IMR-90 (cell line): ENCODE measurements at regions of chr12 and their contacts with region 1.

Region 1: DNA sequence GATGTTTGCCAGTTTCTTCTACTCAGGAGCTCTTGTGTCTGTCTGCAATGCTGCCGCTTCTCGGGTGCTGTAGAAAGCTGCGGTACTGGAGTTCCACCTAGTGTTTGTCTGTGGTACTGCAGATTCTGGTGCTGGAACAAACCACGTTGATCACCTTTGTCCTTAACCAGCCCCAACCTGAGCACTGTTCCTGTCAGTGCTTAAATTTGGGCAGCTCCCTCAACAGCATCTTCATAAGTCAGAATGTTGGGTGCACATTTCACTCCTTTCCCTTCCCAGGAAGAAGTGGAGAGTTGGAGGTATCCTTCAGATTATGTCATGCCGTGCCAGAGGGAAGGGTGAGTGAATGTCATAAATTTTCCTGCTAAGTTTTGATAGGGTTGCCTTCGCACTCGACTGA is 48.7 kb upstream of the LALBA start:
- DNase-seq: peak; percentile 72
- ATAC-seq: peak; percentile 99
- H3K4me3 ChIP-seq: no peak overlapping the region
- H3K27ac ChIP-seq: no peak overlapping the region
- H3K4me1 ChIP-seq: no peaks in the 10 kb centered on the region
- H3K27me3 ChIP-seq: peaks cover 2% of the 10 kb centered on the region
- CTCF ChIP-seq: peak; percentile 90
- POLR2A ChIP-seq: no peak
- RAD21 ChIP-seq: peak; percentile 91

Region 2: GRCh38 chr12:47963340-47964040 is 655.1 kb before region 1 on chr12 and contains the start of gene TMEM106C:
- CTCF ChIA-PET with region 1: no interaction called
- POLR2A ChIA-PET with region 1: no interaction called
- dilution Hi-C with region 1: no loop called
- in situ Hi-C with region 1: no loop called
- intact Hi-C with region 1: loop called (anchors 10 kb)
- DNase-seq: peak; percentile 85
- ATAC-seq: peak; percentile 99
- H3K4me3 ChIP-seq: peak within 1 kb of the TSS; percentile 63
- H3K27ac ChIP-seq: peak within 1 kb of the TSS; percentile 35; the same call in 1 of the 2 replicates
- H3K4me1 ChIP-seq: peaks cover 3% of the 10 kb centered on the region
- H3K27me3 ChIP-seq: peaks cover 8% of the 10 kb centered on the region
- CTCF ChIP-seq: peak; percentile 99
- POLR2A ChIP-seq: no peak
- RAD21 ChIP-seq: peak; percentile 67
- total RNA-seq, gene TMEM106C: 63.9 and 72.1 TPM in 2 replicates

Region 3: GRCh38 chr12:48084066-48084465 is 534.5 kb before region 1 on chr12:
- CTCF ChIA-PET with region 1: no interaction called
- POLR2A ChIA-PET with region 1: no interaction called
- dilution Hi-C with region 1: no loop called
- in situ Hi-C with region 1: no loop called
- intact Hi-C with region 1: loop called (anchors 10 kb)
- DNase-seq: peak; percentile 13
- ATAC-seq: no peak; the same call in 1 of the 2 replicates
- H3K4me3 ChIP-seq: no peak overlapping the region
- H3K27ac ChIP-seq: no peak overlapping the region
- H3K4me1 ChIP-seq: no peaks in the 10 kb centered on the region
- H3K27me3 ChIP-seq: no peaks in the 10 kb centered on the region
- CTCF ChIP-seq: 0 out of 2 replicates have a peak, but pooled peaks have one; percentile 20
- POLR2A ChIP-seq: no peak
- RAD21 ChIP-seq: no peak; the same call in 1 of the 2 replicates

Region 4: DNA sequence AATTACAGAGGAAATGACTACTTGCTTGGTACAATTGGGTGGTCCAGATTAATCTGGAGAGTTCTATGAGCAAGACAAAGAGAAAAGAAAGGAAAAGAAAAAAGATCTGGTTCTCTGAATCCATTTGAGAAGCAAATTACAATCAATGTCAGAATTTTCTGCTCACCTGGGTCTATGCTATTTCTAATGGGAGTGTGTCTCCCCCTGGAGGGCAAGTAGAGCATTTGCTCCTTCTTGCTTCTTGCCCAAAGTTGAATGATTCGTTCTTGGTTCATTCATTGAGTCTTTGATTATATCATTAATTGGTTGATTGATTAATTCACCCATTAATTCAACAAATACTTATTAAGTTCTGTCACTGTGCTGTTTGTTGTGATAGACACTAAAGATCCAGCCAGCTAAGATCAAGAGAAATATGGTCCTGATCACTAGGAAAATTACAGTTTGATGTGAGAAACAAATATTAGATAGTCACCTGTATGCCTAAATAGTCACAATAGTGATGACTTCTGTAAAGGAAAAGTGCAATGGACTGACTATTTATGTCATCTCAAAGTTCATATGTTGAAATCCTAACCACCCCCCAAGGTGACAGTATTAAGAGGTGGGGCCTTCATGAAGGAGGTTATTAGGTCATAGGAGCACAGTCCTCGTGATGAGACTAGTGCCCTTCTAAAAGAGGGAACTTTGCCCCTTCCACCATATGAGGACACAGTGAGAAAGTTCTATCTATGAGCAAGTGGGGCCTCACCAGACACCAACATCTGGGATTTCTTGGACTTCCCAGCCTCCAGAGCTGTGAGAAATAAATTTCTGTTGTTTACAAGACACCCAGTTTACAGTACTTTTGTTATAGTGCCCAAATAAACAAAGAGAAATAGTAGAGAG is 453.2 kb before region 1 on chr12:
- CTCF ChIA-PET with region 1: no interaction called
- POLR2A ChIA-PET with region 1: no interaction called
- dilution Hi-C with region 1: no loop called
- in situ Hi-C with region 1: no loop called
- intact Hi-C with region 1: loop called (anchors 5 kb)
- DNase-seq: peak; percentile 68
- ATAC-seq: peak; percentile 57; the same call in 1 of the 2 replicates
- H3K4me3 ChIP-seq: no peak overlapping the region
- H3K27ac ChIP-seq: no peak overlapping the region
- H3K4me1 ChIP-seq: no peaks in the 10 kb centered on the region
- H3K27me3 ChIP-seq: peaks cover 7% of the 10 kb centered on the region
- CTCF ChIP-seq: peak; percentile 84
- POLR2A ChIP-seq: no peak
- RAD21 ChIP-seq: peak; percentile 83

Region 5: DNA sequence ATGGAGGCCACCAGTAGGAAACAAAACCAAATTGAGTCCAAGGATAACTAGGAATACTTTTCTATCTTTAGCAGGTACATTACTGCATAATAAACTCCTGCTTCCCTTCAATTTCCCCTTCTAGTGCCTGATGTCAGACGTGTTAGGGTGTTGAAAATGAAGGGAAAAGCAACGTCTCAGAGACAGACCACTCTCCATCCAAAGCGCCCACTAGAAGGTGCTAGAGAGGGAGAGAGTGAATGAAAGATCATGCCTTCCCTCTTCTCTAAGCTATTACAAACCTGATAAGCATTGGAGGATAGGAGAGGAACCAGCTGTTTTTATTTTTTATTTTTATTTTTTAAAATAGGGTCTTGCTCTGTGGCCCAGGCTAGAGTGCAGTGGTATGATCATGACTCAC is 331.9 kb before region 1 on chr12:
- CTCF ChIA-PET with region 1: no interaction called
- POLR2A ChIA-PET with region 1: no interaction called
- dilution Hi-C with region 1: no loop called
- in situ Hi-C with region 1: no loop called
- intact Hi-C with region 1: loop called (anchors 10 kb)
- DNase-seq: no peak
- ATAC-seq: no peak
- H3K4me3 ChIP-seq: no peak overlapping the region
- H3K27ac ChIP-seq: no peak overlapping the region
- H3K4me1 ChIP-seq: no peaks in the 10 kb centered on the region
- H3K27me3 ChIP-seq: no peaks in the 10 kb centered on the region; the same call in 1 of the 2 replicates
- CTCF ChIP-seq: 0 out of 2 replicates have a peak, but pooled peaks have one; percentile 7
- POLR2A ChIP-seq: no peak
- RAD21 ChIP-seq: no peak

Region 6: GRCh38 chr12:48542300-48542928 is 76.1 kb before region 1 on chr12:
- CTCF ChIA-PET with region 1: interaction called, 10 read pairs
- POLR2A ChIA-PET with region 1: no interaction called
- dilution Hi-C with region 1: no loop called
- in situ Hi-C with region 1: loop called (anchors 5 kb)
- intact Hi-C with region 1: loop called (anchors 1 kb)
- DNase-seq: peak; percentile 31
- ATAC-seq: peak; percentile 84
- H3K4me3 ChIP-seq: no peak overlapping the region
- H3K27ac ChIP-seq: no peak overlapping the region
- H3K4me1 ChIP-seq: no peaks in the 10 kb centered on the region
- H3K27me3 ChIP-seq: peaks cover 4% of the 10 kb centered on the region; the same call in 1 of the 2 replicates
- CTCF ChIP-seq: peak; percentile 62
- POLR2A ChIP-seq: no peak
- RAD21 ChIP-seq: peak; percentile 66

Region 7: GRCh38 chr12:48556631-48557030 is 61.9 kb before region 1 on chr12:
- CTCF ChIA-PET with region 1: no interaction called
- POLR2A ChIA-PET with region 1: no interaction called
- dilution Hi-C with region 1: no loop called
- in situ Hi-C with region 1: no loop called
- intact Hi-C with region 1: no loop called
- DNase-seq: no peak
- ATAC-seq: no peak
- H3K4me3 ChIP-seq: no peak overlapping the region
- H3K27ac ChIP-seq: no peak overlapping the region
- H3K4me1 ChIP-seq: no peaks in the 10 kb centered on the region
- H3K27me3 ChIP-seq: no peaks in the 10 kb centered on the region; the same call in 1 of the 2 replicates
- CTCF ChIP-seq: no peak
- POLR2A ChIP-seq: no peak
- RAD21 ChIP-seq: no peak